Activated CD4-positive, alpha-beta memory T cell treated with anti-CD3 and anti-CD28 coated beads, Interleukin-2, amount 10 ng/mL, durations not matched to agents 7 days and 5 days (primary cell): ENCODE measurements at regions of chr3 and their contacts with region 1.

Region 1: GRCh38 chr3:69236812-69237707 is 114.7 kb upstream of the LMOD3 start:
- DNase-seq: no peak
- H3K4me3 Mint-ChIP-seq: peak overlapping the region; percentile 70
- H3K27ac Mint-ChIP-seq: peak overlapping the region; percentile 48
- H3K4me1 Mint-ChIP-seq: peaks cover 30% of the 10 kb centered on the region
- H3K27me3 Mint-ChIP-seq: no peaks in the 10 kb centered on the region

Region 2: DNA sequence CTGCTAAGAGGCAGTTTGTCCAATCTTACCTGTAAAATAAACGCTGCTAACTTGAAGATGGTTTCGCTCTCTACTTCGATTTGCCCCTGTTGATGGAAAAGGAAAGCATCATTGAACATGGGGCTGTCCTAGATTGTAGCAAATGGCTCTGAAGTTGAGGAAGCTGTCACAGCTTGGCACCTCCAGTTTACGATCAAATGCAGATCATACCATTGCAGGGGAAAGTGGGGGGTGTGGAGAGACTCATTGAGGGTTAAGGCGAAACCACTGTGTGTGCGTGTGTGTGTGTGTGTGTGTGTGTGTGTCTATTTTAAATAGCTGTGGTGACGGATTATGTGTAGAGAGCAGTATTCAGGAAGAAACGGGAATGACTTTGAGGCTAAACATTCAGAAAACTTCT is 13.0 kb after region 1 on chr3:
- CTCF ChIA-PET with region 1: no interaction called
- POLR2A ChIA-PET with region 1: interaction called, 13 read pairs
- DNase-seq: peak; percentile 72
- H3K4me3 Mint-ChIP-seq: peak overlapping the region; percentile 71
- H3K27ac Mint-ChIP-seq: peak overlapping the region; percentile 44
- H3K4me1 Mint-ChIP-seq: peaks cover 10% of the 10 kb centered on the region
- H3K27me3 Mint-ChIP-seq: peaks cover 7% of the 10 kb centered on the region

Region 3: GRCh38 chr3:69260216-69260787 is 23.2 kb after region 1 on chr3:
- CTCF ChIA-PET with region 1: no interaction called
- POLR2A ChIA-PET with region 1: no interaction called
- DNase-seq: no peak
- H3K4me3 Mint-ChIP-seq: no peak overlapping the region
- H3K27ac Mint-ChIP-seq: no peak overlapping the region
- H3K4me1 Mint-ChIP-seq: no peaks in the 10 kb centered on the region
- H3K27me3 Mint-ChIP-seq: peaks cover 3% of the 10 kb centered on the region